Panc1 (cell line): ENCODE measurements at regions of chr12 and their contacts with region 1.

Region 1: GRCh38 chr12:69359531-69360347 is at the start of gene YEATS4:
- DNase-seq: peak; percentile 56
- ATAC-seq: peak; percentile 93
- H3K4me3 ChIP-seq: peak within 1 kb of the TSS; percentile 65 to 71
- H3K27ac ChIP-seq: peak within 1 kb of the TSS; percentile 99
- H3K4me1 ChIP-seq: peaks cover 6% of the 10 kb centered on the region
- H3K27me3 ChIP-seq: no peaks in the 10 kb centered on the region
- CTCF ChIP-seq: no peak
- total RNA-seq, gene YEATS4: 20.9 TPM

Region 2: GRCh38 chr12:67773896-67774295 is 1585.8 kb before region 1 on chr12:
- CTCF ChIA-PET with region 1: no interaction called
- POLR2A ChIA-PET with region 1: no interaction called
- in situ Hi-C with region 1: no loop called
- intact Hi-C with region 1: no loop called
- DNase-seq: no peak
- ATAC-seq: no peak
- H3K4me3 ChIP-seq: no peak overlapping the region
- H3K27ac ChIP-seq: no peak overlapping the region
- H3K4me1 ChIP-seq: no peaks in the 10 kb centered on the region
- H3K27me3 ChIP-seq: peaks cover 2% of the 10 kb centered on the region; the same call in 1 of the 2 replicates
- CTCF ChIP-seq: no peak

Region 3: DNA sequence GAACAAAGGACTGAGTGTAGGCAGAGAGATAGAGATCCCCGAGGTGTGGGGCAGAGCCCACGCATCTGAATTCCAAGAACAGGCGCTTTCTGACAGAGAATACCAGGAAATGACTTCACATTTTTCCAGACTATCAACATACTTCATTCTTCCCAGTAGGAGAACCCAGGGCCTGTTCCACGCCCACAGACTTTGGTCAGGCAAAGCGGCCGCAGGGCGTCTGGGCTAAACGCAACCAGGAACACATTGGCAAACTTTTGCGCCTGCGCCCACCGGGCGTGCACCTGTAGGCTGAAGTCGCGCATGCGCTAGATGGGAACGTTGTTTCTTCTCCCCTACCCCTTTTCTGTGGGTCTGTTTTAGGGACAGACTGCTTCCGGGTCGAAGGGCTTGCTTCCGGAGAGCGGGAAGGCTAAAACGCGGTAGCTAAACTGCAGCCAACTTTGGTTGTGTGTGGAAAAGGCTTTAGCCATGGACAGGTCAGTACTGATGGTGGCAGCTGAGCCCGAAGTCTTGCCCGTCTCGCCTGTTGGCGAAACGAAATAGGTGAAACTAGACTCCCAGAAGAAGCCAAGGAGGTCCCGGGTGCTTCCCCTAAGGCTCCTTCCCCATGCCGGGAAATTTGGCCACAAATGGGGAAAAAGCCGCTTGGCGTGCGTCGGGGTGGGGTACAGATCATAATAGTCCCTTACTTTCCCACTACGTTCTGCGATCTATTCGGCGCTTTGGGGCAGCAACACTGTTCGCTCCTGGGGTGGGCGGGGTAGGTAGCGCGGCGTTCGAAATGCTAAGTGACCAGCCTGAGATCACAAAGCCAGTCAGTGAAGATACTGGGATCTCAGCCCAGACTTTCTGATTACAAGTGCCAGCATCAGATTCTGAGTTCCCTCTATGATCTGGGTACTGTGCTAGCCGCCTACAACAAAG is 672.9 kb before region 1 on chr12 and contains the start of gene NUP107:
- CTCF ChIA-PET with region 1: interaction called, 12 read pairs
- POLR2A ChIA-PET with region 1: no interaction called
- in situ Hi-C with region 1: no loop called
- intact Hi-C with region 1: no loop called
- DNase-seq: peak; percentile 89
- ATAC-seq: peak; percentile 99
- H3K4me3 ChIP-seq: peak within 1 kb of the TSS; percentile 87 to 95
- H3K27ac ChIP-seq: peak within 1 kb of the TSS; percentile 98
- H3K4me1 ChIP-seq: peaks cover 21% of the 10 kb centered on the region
- H3K27me3 ChIP-seq: no peaks in the 10 kb centered on the region
- CTCF ChIP-seq: no peak
- total RNA-seq, gene NUP107: 82.3 TPM

Region 4: GRCh38 chr12:69341328-69341727 is 18.4 kb before region 1 on chr12:
- CTCF ChIA-PET with region 1: interaction called, 11 read pairs
- POLR2A ChIA-PET with region 1: interaction called, 8 read pairs
- in situ Hi-C with region 1: no loop called
- intact Hi-C with region 1: no loop called
- DNase-seq: no peak
- ATAC-seq: peak; percentile 42; the same call in 1 of the 2 replicates
- H3K4me3 ChIP-seq: no peak overlapping the region
- H3K27ac ChIP-seq: no peak overlapping the region
- H3K4me1 ChIP-seq: no peaks in the 10 kb centered on the region
- H3K27me3 ChIP-seq: no peaks in the 10 kb centered on the region; the same call in 1 of the 2 replicates
- CTCF ChIP-seq: no peak

Region 5: DNA sequence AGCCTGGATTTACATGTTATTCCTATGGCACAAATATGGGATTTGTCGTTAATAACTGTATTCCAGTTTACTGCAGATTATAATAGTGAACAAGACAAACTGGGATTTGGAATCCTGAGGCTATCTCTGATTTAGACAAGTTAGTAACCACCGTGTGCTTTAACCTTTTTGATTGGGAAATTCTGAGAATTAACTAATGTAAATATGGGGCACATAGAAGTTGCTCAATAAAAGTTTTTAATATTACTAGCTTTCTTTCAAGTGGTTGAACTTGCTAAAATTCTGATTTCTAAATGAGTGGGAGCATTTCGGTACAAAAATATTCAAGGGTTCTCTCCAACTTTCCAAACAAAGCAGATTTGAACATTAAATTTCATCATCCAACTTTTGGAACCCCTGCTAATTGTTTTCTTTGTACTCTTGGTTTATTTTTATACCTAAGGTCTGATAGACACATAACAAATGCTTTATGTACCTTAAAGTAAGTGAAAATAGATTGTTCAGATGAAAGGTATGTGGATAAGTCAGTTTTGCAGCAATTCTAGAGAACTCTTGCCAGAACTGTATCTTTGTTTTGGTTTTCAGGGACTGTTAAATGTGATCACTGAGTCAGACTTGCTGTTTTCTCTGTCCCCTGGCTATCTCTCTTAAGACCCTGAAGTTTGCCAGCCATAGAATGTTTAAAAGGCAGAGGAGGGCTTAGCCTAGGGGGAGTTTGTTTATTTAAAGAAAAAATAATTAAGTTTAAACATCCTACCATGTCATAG is 167.9 kb after region 1 on chr12:
- CTCF ChIA-PET with region 1: interaction called, 10 read pairs
- POLR2A ChIA-PET with region 1: no interaction called
- in situ Hi-C with region 1: no loop called
- intact Hi-C with region 1: no loop called
- DNase-seq: no peak
- ATAC-seq: peak; percentile 31; the same call in 1 of the 2 replicates
- H3K4me3 ChIP-seq: no peak overlapping the region
- H3K27ac ChIP-seq: no peak overlapping the region
- H3K4me1 ChIP-seq: peaks cover 5% of the 10 kb centered on the region
- H3K27me3 ChIP-seq: no peaks in the 10 kb centered on the region
- CTCF ChIP-seq: no peak

Region 6: GRCh38 chr12:69570545-69571399 is 211.0 kb after region 1 on chr12:
- CTCF ChIA-PET with region 1: interaction called, 17 read pairs
- POLR2A ChIA-PET with region 1: interaction called, 11 read pairs
- in situ Hi-C with region 1: no loop called
- intact Hi-C with region 1: loop called (anchors 10 kb)
- DNase-seq: no peak
- ATAC-seq: peak; percentile 88
- H3K4me3 ChIP-seq: no peak overlapping the region
- H3K27ac ChIP-seq: no peak overlapping the region
- H3K4me1 ChIP-seq: no peaks in the 10 kb centered on the region
- H3K27me3 ChIP-seq: no peaks in the 10 kb centered on the region
- CTCF ChIP-seq: peak; percentile 83; the same call in 1 of the 2 replicates

Region 7: GRCh38 chr12:69655377-69656336 is 295.9 kb after region 1 on chr12:
- CTCF ChIA-PET with region 1: interaction called, 13 read pairs
- POLR2A ChIA-PET with region 1: no interaction called
- in situ Hi-C with region 1: no loop called
- intact Hi-C with region 1: no loop called
- DNase-seq: no peak
- ATAC-seq: no peak
- H3K4me3 ChIP-seq: no peak overlapping the region
- H3K27ac ChIP-seq: no peak overlapping the region; the same call in 1 of the 2 replicates
- H3K4me1 ChIP-seq: peaks cover 4% of the 10 kb centered on the region; the same call in 1 of the 2 replicates
- H3K27me3 ChIP-seq: no peaks in the 10 kb centered on the region
- CTCF ChIP-seq: no peak